GM10248 (cell line): ENCODE measurements at regions of chr3 and their contacts with region 1.

Region 1: DNA sequence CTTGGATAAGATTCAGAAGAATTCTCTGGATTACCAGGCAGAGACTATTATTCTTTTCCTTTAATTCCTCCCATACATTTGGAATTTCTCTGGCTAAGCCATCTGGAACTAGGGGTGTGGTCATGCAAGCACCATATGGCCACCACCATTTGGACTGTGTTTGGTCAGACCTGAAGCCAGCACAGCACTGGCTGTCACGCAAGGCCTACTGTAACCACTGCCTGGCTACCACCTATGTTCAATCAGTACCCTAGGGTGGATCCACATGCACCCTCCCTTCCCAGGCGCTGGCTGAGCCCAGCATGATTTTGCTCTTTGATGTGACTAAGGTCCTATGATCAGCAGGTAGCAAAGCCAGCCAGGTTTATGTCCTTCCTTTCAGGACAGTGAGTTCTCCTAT is 287.8 kb upstream of the GOLIM4 start:
- DNase-seq: no peak
- CTCF ChIP-seq: no peak

Region 2: GRCh38 chr3:168395551-168395950 is 12.0 kb after region 1 on chr3:
- CTCF ChIA-PET with region 1: interaction called, 16 read pairs
- POLR2A ChIA-PET with region 1: no interaction called
- DNase-seq: no peak
- CTCF ChIP-seq: no peak